Pancreas (tissue), 10 donors: ENCODE measurements at regions of chr7 and their contacts with region 1.

Region 1: GRCh38 chr7:98294796-98295382 is 13.4 kb downstream of the BRI3 start:
- DNase-seq: peak; percentile 63 to 89 (median 76)
- ATAC-seq: peak; percentile 68 to 90 (median 88)
- H3K4me3 ChIP-seq: no peak overlapping the region
- H3K27ac ChIP-seq: peak overlapping the region in 1 of 4 donors; percentile 2
- H3K4me1 ChIP-seq: peaks cover 0 to 3% (median 0%) of the 10 kb centered on the region in 3 donors
- H3K27me3 ChIP-seq: no peaks in the 10 kb centered on the region
- CTCF ChIP-seq: peak; percentile 39 to 66 (median 48)

Region 2: GRCh38 chr7:98400542-98401340 is 105.9 kb after region 1 on chr7 and contains the start of gene BAIAP2L1:
- intact Hi-C with region 1: loop called in 2 of 3 experiments (anchors 5 to 10 kb)
- DNase-seq: peak; percentile 94 to 100 (median 98)
- ATAC-seq: peak; percentile 93 to 98 (median 98)
- H3K4me3 ChIP-seq: peak within 1 kb of the TSS; percentile 42 to 87 (median 64)
- H3K27ac ChIP-seq: peak within 1 kb of the TSS; percentile 65 to 91 (median 84)
- H3K4me1 ChIP-seq: peaks cover 6 to 10% (median 7%) of the 10 kb centered on the region in 3 donors
- H3K27me3 ChIP-seq: no peaks in the 10 kb centered on the region
- CTCF ChIP-seq: peak in 3 of 4 donors; percentile 55 to 83 (median 61)
- total RNA-seq, gene BAIAP2L1: 18.8 to 31.5 (median 24.2) TPM

Region 3: DNA sequence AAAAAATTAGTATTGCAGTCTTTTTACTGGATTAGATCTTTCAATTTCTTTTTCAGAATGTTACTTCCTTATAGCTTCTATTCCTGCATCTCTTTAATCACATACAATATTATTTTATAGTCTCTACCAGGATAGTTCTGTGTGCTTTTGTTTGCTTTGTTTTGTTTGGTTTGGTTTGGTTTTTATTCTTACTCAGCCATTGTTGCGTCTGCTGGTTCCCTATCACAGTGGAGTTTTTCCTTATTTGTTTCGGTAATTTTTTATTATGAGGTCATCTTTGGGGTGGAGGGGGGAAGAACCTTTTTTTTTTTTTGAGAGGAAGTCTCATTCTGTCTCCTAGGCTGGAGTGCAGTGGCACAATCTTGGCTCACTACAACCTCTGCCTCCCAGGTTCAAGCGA is 115.0 kb after region 1 on chr7:
- intact Hi-C with region 1: loop called in 2 of 3 experiments (anchors 5 to 10 kb)
- DNase-seq: no peak
- ATAC-seq: peak in 3 of 4 donors; percentile 53 to 73 (median 63)
- H3K4me3 ChIP-seq: no peak overlapping the region
- H3K27ac ChIP-seq: peak overlapping the region in 2 of 4 donors; percentile 50 to 72
- H3K4me1 ChIP-seq: peaks cover 0 to 9% (median 2%) of the 10 kb centered on the region in 3 donors
- H3K27me3 ChIP-seq: no peaks in the 10 kb centered on the region
- CTCF ChIP-seq: no peak